GM23248 (cell line): ENCODE measurements at regions of chr1 and their contacts with region 1.

Region 1: DNA sequence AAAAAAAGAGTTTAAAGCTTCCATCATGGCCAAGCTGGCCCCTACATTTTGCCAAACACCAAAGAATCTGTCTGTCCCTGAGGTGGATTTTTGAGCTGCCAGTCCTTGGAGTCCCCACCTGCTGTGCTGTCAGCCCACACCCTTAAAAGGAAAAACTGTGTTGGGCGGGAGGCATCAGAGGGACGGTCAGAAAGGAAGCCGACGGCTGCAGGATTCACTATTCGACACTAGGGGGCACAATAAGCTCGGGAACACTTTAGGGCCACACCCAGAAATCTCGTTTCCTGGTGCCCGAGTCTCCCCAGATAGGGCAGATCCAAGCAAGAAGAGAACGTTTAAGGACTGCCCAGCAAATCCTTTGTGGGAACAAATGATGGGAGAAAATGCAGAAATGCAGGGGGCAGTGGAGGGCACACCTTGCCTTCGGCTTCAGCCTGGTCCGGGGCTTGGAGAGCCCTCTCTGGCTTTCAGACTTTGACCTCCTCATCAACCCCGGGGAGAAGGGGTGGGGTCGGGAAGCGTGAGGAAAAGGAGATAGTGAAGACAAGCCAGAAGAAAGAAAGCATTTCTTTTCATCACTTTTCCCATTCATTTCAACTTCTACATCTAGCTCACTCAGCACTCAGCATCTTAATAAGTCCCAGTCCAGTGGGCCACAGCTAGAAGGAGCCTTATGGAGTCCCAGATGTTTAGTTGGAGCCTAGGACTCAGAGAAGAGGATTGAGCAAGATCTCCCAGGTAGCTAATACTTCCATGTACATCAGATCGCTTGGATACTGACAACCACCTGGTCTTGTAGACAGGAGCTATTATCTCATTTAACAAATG is 5.0 kb upstream of the CTTNBP2NL start:
- DNase-seq: peak; percentile 95
- H3K4me3 ChIP-seq: peak overlapping the region; percentile 73
- H3K27ac ChIP-seq: peak overlapping the region; percentile 50
- H3K4me1 ChIP-seq: peaks cover 42% of the 10 kb centered on the region
- H3K27me3 ChIP-seq: no peaks in the 10 kb centered on the region

Region 2: DNA sequence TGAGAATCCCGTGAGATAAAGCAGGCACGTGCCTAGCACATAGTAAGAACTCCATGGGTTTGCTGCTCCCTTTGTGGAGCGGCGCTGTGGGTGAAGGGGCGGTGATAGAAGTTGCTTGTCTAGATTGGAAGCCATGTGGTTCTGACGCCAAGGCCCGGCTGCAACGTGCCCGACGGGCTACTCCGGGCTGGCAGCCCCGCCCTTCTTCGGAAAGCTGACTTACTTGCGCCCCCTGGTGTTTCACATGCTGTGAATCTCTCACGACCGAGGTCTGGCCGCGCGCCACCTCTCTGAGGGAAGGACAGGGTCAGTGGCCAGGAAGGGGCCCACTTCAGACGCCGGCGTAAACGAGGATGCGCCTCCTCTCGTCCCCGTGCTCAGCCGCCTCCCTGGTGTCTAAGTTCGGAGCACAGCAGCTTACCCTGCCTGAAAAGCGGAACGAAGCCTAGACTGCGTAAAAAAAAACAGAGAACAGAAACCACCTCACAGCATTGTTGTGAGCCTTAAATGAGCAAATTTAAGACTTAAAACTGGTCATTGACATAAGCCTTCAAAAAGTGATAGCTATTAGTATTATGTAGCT is 75.2 kb after region 1 on chr1:
- in situ Hi-C with region 1: loop called (anchors 10 kb)
- DNase-seq: peak; percentile 98
- H3K4me3 ChIP-seq: peak overlapping the region; percentile 72
- H3K27ac ChIP-seq: peak overlapping the region; percentile 60
- H3K4me1 ChIP-seq: peaks cover 19% of the 10 kb centered on the region
- H3K27me3 ChIP-seq: no peaks in the 10 kb centered on the region

Region 3: DNA sequence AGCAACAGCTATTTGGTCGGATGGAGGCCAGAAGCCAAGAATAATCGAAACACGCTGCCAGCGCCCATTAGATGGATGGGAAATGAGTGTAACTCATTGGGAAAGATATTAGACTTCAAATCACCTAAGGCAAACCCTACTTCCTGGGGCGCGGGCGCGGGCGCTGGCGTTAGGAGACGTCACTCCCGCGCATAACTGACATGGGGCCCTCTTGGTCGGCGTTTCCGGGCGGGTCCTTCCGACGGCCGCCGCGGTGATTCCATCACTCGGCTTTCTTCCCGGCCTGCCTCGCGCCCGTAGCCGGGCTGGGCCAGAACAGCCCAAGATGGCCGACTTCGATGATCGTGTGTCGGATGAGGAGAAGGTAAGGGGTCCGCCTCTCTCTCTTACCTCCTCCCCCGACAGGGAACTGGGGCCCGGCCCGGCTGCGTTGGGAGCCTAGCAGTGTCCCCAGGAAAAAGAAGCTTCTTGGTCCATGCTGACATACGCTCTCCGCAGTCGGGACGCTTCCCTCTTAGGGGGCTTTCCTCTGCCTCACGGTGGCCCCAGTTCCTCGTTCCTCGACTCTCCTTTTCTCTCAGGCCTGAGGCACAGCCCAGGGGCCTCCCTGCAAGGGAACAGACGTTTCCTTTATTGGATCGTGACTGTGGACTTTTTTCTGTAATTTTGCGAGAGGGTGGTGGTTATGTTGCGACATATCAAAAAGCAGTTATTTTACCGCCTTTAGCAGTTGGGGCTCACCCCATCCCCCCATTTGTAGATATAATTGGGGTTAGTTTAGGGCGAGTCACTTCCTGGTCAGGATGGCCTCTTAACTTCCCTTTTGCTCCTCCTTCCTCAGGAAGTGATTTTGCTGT is 228.8 kb after region 1 on chr1 and contains the start of gene CAPZA1:
- in situ Hi-C with region 1: loop called (anchors 10 kb)
- DNase-seq: peak; percentile 98
- H3K4me3 ChIP-seq: peak within 1 kb of the TSS; percentile 99
- H3K27ac ChIP-seq: peak within 1 kb of the TSS; percentile 97
- H3K4me1 ChIP-seq: peaks cover 31% of the 10 kb centered on the region
- H3K27me3 ChIP-seq: no peaks in the 10 kb centered on the region
- total RNA-seq, gene CAPZA1: 266 and 273 TPM in 2 replicates

Region 4: GRCh38 chr1:112698366-112699310 is 307.6 kb after region 1 on chr1:
- in situ Hi-C with region 1: no loop called
- DNase-seq: no peak
- H3K4me3 ChIP-seq: no peak overlapping the region
- H3K27ac ChIP-seq: no peak overlapping the region
- H3K4me1 ChIP-seq: peaks cover 17% of the 10 kb centered on the region
- H3K27me3 ChIP-seq: no peaks in the 10 kb centered on the region

Region 5: DNA sequence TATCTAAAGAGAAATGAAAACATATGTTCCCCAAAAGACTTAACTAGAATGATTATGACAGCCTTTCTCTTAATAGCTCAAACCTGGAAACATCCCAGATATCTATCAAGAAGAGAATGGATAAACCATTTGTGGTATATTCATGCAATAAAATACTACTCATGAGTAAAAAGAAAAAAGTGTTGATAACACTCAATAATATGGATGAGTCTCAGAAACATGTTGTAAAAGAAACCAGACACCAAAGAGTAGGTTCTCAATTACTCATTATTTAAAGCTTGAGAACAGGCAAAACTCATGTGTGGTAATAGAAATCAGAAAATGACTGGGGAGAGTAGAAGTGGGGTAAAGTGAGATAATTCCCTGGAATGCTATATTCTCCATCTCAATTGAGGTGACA is 1214.2 kb after region 1 on chr1:
- in situ Hi-C with region 1: no loop called
- DNase-seq: peak; percentile 3
- H3K4me3 ChIP-seq: no peak overlapping the region
- H3K27ac ChIP-seq: no peak overlapping the region
- H3K4me1 ChIP-seq: no peaks in the 10 kb centered on the region
- H3K27me3 ChIP-seq: no peaks in the 10 kb centered on the region